Gastrocnemius medialis (tissue), 4 donors: ENCODE measurements at regions of chr1 and their contacts with region 1.

Region 1: GRCh38 chr1:222643938-222644635 is 26.2 kb downstream of the MIA3 start:
- DNase-seq: peak; percentile 94 to 98
- ATAC-seq: peak; percentile 99
- H3K4me3 ChIP-seq: peak overlapping the region; percentile 77 to 97 (median 88)
- H3K27ac ChIP-seq: peak overlapping the region; percentile 86 to 96 (median 90)
- H3K4me1 ChIP-seq: peaks cover 12 to 15% of the 10 kb centered on the region in 2 donors
- H3K27me3 ChIP-seq: no peaks in the 10 kb centered on the region
- CTCF ChIP-seq: peak in 1 of 5 experiments; percentile 14
- POLR2A ChIP-seq: peak; percentile 68 to 72

Region 2: GRCh38 chr1:222546548-222547259 is 97.4 kb before region 1 on chr1:
- in situ Hi-C with region 1: no loop called
- intact Hi-C with region 1: no loop called
- DNase-seq: no peak
- ATAC-seq: no peak
- H3K4me3 ChIP-seq: no peak overlapping the region
- H3K27ac ChIP-seq: no peak overlapping the region
- H3K4me1 ChIP-seq: no peaks in the 10 kb centered on the region
- H3K27me3 ChIP-seq: peaks cover 0 to 8% (median 6%) of the 10 kb centered on the region in 3 donors
- CTCF ChIP-seq: no peak
- POLR2A ChIP-seq: no peak

Region 3: DNA sequence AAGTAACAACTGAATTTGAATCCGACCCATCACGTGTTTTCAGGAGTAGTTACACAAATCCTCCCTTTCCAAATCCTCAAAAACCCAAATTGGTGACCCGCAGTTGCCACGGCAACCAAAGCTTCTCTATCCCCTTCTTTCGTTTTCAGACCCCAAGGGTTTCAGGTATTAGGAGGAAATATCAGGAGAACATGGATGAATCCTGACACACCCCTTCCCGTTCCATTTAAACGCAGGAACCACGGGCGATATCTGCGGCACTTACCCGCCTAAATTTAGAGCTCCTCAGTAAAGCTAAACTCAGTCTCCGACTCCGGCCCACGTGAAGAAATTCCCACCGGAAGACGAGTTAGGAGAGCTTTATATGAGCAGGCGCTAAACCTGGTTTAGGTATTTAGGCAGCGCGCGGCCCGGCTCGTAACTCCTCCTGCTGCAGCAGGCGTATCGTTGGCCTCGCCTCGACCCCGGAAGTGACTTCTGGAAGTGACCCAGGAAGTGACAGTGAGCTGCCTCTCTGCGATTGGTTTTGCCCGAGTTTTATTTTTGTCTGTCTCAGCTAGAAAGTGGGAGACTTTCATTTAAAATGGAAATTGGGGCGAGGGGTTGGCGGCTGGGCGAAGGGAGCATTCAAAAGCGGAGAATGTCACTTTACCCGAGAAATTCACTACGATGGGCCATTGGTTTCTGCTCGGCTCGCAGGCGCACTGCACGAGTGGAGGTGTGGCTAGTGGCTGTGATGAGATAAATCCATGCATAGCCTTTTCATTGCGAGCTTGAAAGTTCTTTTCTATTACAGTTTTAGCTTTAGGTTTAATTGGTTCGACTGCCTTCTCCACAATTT is 54.4 kb before region 1 on chr1 and contains the start of gene TAF1A:
- in situ Hi-C with region 1: no loop called
- intact Hi-C with region 1: loop called (anchors 5 kb)
- DNase-seq: peak; percentile 78 to 80
- ATAC-seq: peak; percentile 92 to 99
- H3K4me3 ChIP-seq: peak within 1 kb of the TSS; percentile 67 to 76 (median 72)
- H3K27ac ChIP-seq: peak within 1 kb of the TSS; percentile 75 to 82 (median 80)
- H3K4me1 ChIP-seq: peaks cover 12 to 18% of the 10 kb centered on the region in 2 donors
- H3K27me3 ChIP-seq: no peaks in the 10 kb centered on the region
- CTCF ChIP-seq: no peak
- POLR2A ChIP-seq: no peak
- total RNA-seq, gene TAF1A: 1.5 to 3.4 (median 1.6) TPM

Region 4: GRCh38 chr1:222618001-222618879 is 25.8 kb before region 1 on chr1 and contains the start of gene MIA3:
- in situ Hi-C with region 1: no loop called
- intact Hi-C with region 1: loop called (anchors 1 kb)
- DNase-seq: peak; percentile 71 to 72
- ATAC-seq: peak; percentile 78 to 79
- H3K4me3 ChIP-seq: peak within 1 kb of the TSS; percentile 73 to 95 (median 90)
- H3K27ac ChIP-seq: peak within 1 kb of the TSS; percentile 76 to 92 (median 90)
- H3K4me1 ChIP-seq: peaks cover 12 to 13% of the 10 kb centered on the region in 2 donors
- H3K27me3 ChIP-seq: no peaks in the 10 kb centered on the region
- CTCF ChIP-seq: no peak
- POLR2A ChIP-seq: peak; percentile 17 to 36
- total RNA-seq, gene MIA3: 24.1 to 75.3 (median 47.9) TPM

Region 5: DNA sequence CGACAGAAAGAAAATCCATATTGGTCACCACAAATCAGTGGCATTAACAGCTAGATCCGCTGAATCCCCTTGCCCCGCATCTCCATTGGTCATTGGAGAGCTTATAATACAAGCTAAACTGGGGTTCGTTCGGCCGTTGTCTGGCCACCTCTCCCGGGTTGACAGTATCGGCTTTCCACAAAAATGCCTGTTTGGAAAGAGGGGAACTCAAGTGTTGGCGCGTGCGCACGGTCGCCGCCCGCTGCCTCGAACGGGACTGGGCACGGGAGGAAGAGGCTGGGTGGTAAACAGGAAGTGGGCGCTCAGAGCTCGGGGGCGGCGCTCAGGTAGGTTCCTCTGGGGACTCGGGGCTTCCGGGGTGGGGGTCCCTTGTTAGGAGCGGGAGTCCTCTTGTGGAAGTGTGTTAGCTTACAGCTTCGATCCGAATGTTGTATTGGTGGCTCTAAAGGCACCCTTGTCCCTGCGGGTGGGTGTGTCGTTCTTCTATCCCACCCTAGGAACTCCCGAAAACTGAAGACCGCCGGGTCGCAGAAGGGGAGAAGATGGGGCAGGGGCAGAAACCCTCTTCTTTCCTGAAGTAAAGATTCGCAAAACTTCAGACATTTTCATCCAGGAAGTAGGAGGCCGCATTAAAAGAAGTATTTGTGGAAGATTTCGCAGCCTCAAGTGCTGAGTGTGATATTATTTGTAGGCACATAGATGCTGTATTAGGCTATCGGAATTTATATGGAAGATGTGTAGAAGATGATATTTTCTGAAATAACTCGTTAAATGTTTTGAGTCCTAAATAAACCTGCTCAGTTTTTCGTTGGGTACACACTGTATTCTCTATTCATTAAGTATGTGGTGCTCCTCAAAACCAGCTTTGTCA is 69.2 kb after region 1 on chr1:
- in situ Hi-C with region 1: loop called in 2 of 4 experiments (anchors 10 kb)
- intact Hi-C with region 1: loop called (anchors 1 kb)
- DNase-seq: peak; percentile 93
- ATAC-seq: peak; percentile 84 to 88
- H3K4me3 ChIP-seq: peak overlapping the region; percentile 84 to 98 (median 90)
- H3K27ac ChIP-seq: peak overlapping the region; percentile 96 to 99 (median 98)
- H3K4me1 ChIP-seq: peaks cover 26 to 36% of the 10 kb centered on the region in 2 donors
- H3K27me3 ChIP-seq: no peaks in the 10 kb centered on the region
- CTCF ChIP-seq: no peak
- POLR2A ChIP-seq: peak; percentile 21 to 53

Region 6: GRCh38 chr1:223531742-223532341 is 887.8 kb after region 1 on chr1:
- in situ Hi-C with region 1: no loop called
- intact Hi-C with region 1: no loop called
- DNase-seq: peak in 1 of 2 donors; percentile 42
- ATAC-seq: peak; percentile 43 to 86
- H3K4me3 ChIP-seq: no peak overlapping the region
- H3K27ac ChIP-seq: no peak overlapping the region
- H3K4me1 ChIP-seq: peaks cover 0 to 13% of the 10 kb centered on the region in 2 donors
- H3K27me3 ChIP-seq: no peaks in the 10 kb centered on the region
- CTCF ChIP-seq: peak; percentile 28 to 61 (median 53)
- POLR2A ChIP-seq: no peak